Breast epithelium (tissue), 4 donors: ENCODE measurements at regions of chr1 and their contacts with region 1.

Region 1: GRCh38 chr1:94801919-94802546 is 18.1 kb upstream of the SLC44A3 start:
- DNase-seq: no peak
- H3K4me3 ChIP-seq: peak overlapping the region; percentile 1 to 47 (median 7)
- H3K27ac ChIP-seq: peak overlapping the region; percentile 79 to 88
- H3K4me1 ChIP-seq: peaks cover 0 to 6% of the 10 kb centered on the region in 2 donors
- H3K27me3 ChIP-seq: no peaks in the 10 kb centered on the region
- CTCF ChIP-seq: peak; percentile 1 to 50 (median 48)
- POLR2A ChIP-seq: no peak

Region 2: GRCh38 chr1:94471271-94471670 is 330.8 kb before region 1 on chr1:
- intact Hi-C with region 1: loop called (anchors 5 kb)
- DNase-seq: no peak
- H3K4me3 ChIP-seq: no peak overlapping the region
- H3K27ac ChIP-seq: no peak overlapping the region
- H3K4me1 ChIP-seq: no peaks in the 10 kb centered on the region
- H3K27me3 ChIP-seq: no peaks in the 10 kb centered on the region
- CTCF ChIP-seq: no peak
- POLR2A ChIP-seq: no peak

Region 3: GRCh38 chr1:94608142-94608851 is 193.7 kb before region 1 on chr1:
- intact Hi-C with region 1: no loop called
- DNase-seq: no peak
- H3K4me3 ChIP-seq: no peak overlapping the region
- H3K27ac ChIP-seq: no peak overlapping the region
- H3K4me1 ChIP-seq: no peaks in the 10 kb centered on the region
- H3K27me3 ChIP-seq: no peaks in the 10 kb centered on the region
- CTCF ChIP-seq: no peak
- POLR2A ChIP-seq: no peak

Region 4: GRCh38 chr1:94755675-94756074 is 46.4 kb before region 1 on chr1:
- intact Hi-C with region 1: no loop called
- DNase-seq: no peak
- H3K4me3 ChIP-seq: no peak overlapping the region
- H3K27ac ChIP-seq: peak overlapping the region; percentile 45 to 46
- H3K4me1 ChIP-seq: peaks cover 0 to 15% of the 10 kb centered on the region in 2 donors
- H3K27me3 ChIP-seq: no peaks in the 10 kb centered on the region
- CTCF ChIP-seq: no peak
- POLR2A ChIP-seq: no peak

Region 5: GRCh38 chr1:94783342-94784264 is 18.4 kb before region 1 on chr1:
- intact Hi-C with region 1: no loop called
- DNase-seq: peak; percentile 86 to 92
- H3K4me3 ChIP-seq: peak overlapping the region in 1 of 3 donors; percentile 1
- H3K27ac ChIP-seq: peak overlapping the region; percentile 80 to 82
- H3K4me1 ChIP-seq: peaks cover 0 to 14% of the 10 kb centered on the region in 2 donors
- H3K27me3 ChIP-seq: no peaks in the 10 kb centered on the region
- CTCF ChIP-seq: no peak
- POLR2A ChIP-seq: no peak

Region 6: GRCh38 chr1:94832446-94832845 is 30.4 kb after region 1 on chr1:
- intact Hi-C with region 1: no loop called
- DNase-seq: no peak
- H3K4me3 ChIP-seq: no peak overlapping the region
- H3K27ac ChIP-seq: no peak overlapping the region
- H3K4me1 ChIP-seq: no peaks in the 10 kb centered on the region
- H3K27me3 ChIP-seq: no peaks in the 10 kb centered on the region
- CTCF ChIP-seq: no peak
- POLR2A ChIP-seq: no peak